H1 (cell line): ENCODE measurements at regions of chrX and their contacts with region 1.

Region 1: GRCh38 chrX:68828740-68829552 is at the start of gene EFNB1:
- DNase-seq: peak; percentile 77 to 78
- H3K4me3 ChIP-seq: peak within 1 kb of the TSS; percentile 40 to 67 (median 45)
- H3K27ac ChIP-seq: no peak within 1 kb of the TSS
- H3K4me1 ChIP-seq: peaks cover 0 to 14% (median 3%) of the 10 kb centered on the region in 4 experiments; a peak in 5 of 7 replicates
- H3K27me3 ChIP-seq: peaks cover 30 to 84% (median 71%) of the 10 kb centered on the region in 4 experiments
- CTCF ChIP-seq: no peak
- EP300 ChIP-seq: no peak
- POLR2A ChIP-seq: peak in 1 of 2 experiments; percentile 73; a peak in 2 of 3 replicates
- RAD21 ChIP-seq: 0 out of 4 replicates have a peak, but pooled peaks of 1 of the 2 experiments have one; percentile 2
- total RNA-seq, gene EFNB1: 2.3 and 3.0 TPM in 2 replicates

Region 2: GRCh38 chrX:68920561-68920960 is 91.6 kb after region 1 on chrX:
- CTCF ChIA-PET with region 1: interaction called, 11 read pairs
- POLR2A ChIA-PET with region 1: interaction called, 4 read pairs
- DNase-seq: no peak
- H3K4me3 ChIP-seq: no peak overlapping the region
- H3K27ac ChIP-seq: no peak overlapping the region
- H3K4me1 ChIP-seq: peaks cover 0 to 5% (median 1%) of the 10 kb centered on the region in 4 experiments; a peak in 1 of 7 replicates
- H3K27me3 ChIP-seq: no peaks in the 10 kb centered on the region
- CTCF ChIP-seq: no peak
- EP300 ChIP-seq: no peak
- POLR2A ChIP-seq: no peak
- RAD21 ChIP-seq: no peak

Region 3: GRCh38 chrX:69028006-69028760 is 199.2 kb after region 1 on chrX:
- CTCF ChIA-PET with region 1: interaction called, 13 read pairs
- POLR2A ChIA-PET with region 1: no interaction called
- DNase-seq: peak in 1 of 2 experiments; percentile 7
- H3K4me3 ChIP-seq: no peak overlapping the region
- H3K27ac ChIP-seq: no peak overlapping the region
- H3K4me1 ChIP-seq: peaks cover 0 to 5% (median 2%) of the 10 kb centered on the region in 4 experiments; a peak in 4 of 7 replicates
- H3K27me3 ChIP-seq: no peaks in the 10 kb centered on the region
- CTCF ChIP-seq: no peak
- EP300 ChIP-seq: no peak
- POLR2A ChIP-seq: no peak
- RAD21 ChIP-seq: no peak

Region 4: GRCh38 chrX:69066966-69067525 is 238.1 kb after region 1 on chrX:
- CTCF ChIA-PET with region 1: interaction called, 12 read pairs
- POLR2A ChIA-PET with region 1: no interaction called
- DNase-seq: peak in 1 of 2 experiments; percentile 8
- H3K4me3 ChIP-seq: no peak overlapping the region
- H3K27ac ChIP-seq: no peak overlapping the region
- H3K4me1 ChIP-seq: peaks cover 0 to 4% (median 0%) of the 10 kb centered on the region in 4 experiments; a peak in 1 of 7 replicates
- H3K27me3 ChIP-seq: no peaks in the 10 kb centered on the region
- CTCF ChIP-seq: no peak
- EP300 ChIP-seq: no peak
- POLR2A ChIP-seq: no peak
- RAD21 ChIP-seq: no peak

Region 5: DNA sequence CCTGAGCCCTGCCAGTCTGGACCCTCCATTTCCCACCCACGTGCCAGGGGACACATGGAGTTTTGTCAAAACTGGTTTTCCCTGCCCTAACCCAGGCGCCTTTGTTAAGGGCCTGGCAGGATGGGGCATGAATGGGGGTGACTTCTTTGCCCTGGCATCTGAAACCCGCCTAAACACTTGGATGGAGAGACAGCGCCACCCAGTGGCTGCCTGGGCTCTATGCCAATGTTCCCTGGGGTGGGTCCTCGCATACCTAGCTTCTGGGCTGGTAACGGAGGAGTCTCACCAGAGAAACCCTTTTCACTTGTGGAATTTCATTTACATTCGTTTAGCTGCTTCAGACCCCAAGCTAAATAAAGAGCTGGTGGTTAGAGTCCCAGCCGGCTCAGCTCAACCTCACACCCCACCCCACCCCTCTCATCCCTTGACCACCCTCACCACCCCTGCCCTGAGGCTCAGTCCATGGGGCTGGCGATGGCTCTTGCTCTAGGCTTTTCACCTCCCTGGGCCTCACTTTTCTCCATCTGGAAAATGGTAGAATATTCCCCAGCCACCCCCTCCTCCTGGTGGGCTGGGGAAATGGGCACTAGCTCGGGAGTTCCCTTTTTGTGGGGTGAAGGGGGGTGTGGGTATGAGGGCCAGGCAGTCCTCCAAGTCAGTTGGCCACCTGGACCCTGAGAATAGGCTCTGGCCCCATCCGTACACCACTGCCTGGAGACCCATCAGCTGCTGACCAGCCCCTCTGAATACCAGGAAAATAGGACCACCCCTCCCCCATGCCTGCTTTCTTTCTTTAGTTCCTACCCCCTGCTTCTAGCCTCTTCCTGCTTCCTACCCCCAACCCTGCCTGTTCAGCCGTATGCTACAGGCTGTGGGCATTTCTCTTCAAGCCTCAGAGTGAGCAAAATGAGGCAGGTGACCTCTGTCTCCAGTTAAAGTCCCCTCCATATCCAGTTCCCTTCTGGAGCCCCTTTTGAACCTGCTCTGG is 393.5 kb after region 1 on chrX:
- CTCF ChIA-PET with region 1: interaction called, 35 read pairs
- POLR2A ChIA-PET with region 1: interaction called, 13 read pairs
- DNase-seq: peak; percentile 73 to 85
- H3K4me3 ChIP-seq: peak overlapping the region in 1 of 4 experiments; percentile 44; a peak in 4 of 8 replicates
- H3K27ac ChIP-seq: no peak overlapping the region
- H3K4me1 ChIP-seq: peaks cover 0 to 15% (median 8%) of the 10 kb centered on the region in 4 experiments; a peak in 4 of 7 replicates
- H3K27me3 ChIP-seq: peaks cover 5 to 21% (median 14%) of the 10 kb centered on the region in 4 experiments
- CTCF ChIP-seq: peak; percentile 69 to 75 (median 75)
- EP300 ChIP-seq: no peak
- POLR2A ChIP-seq: no peak
- RAD21 ChIP-seq: peak; percentile 89 to 92